Mammary epithelial cell (primary cell): ENCODE measurements at regions of chr9 and their contacts with region 1.

Region 1: GRCh38 chr9:34072868-34073590 is 24.3 kb upstream of the UBAP2 start:
- DNase-seq: peak; percentile 79
- H3K4me3 ChIP-seq: no peak overlapping the region
- H3K27ac ChIP-seq: no peak overlapping the region
- H3K4me1 ChIP-seq: peaks cover 18% of the 10 kb centered on the region
- H3K27me3 ChIP-seq: no peaks in the 10 kb centered on the region
- CTCF ChIP-seq: no peak

Region 2: DNA sequence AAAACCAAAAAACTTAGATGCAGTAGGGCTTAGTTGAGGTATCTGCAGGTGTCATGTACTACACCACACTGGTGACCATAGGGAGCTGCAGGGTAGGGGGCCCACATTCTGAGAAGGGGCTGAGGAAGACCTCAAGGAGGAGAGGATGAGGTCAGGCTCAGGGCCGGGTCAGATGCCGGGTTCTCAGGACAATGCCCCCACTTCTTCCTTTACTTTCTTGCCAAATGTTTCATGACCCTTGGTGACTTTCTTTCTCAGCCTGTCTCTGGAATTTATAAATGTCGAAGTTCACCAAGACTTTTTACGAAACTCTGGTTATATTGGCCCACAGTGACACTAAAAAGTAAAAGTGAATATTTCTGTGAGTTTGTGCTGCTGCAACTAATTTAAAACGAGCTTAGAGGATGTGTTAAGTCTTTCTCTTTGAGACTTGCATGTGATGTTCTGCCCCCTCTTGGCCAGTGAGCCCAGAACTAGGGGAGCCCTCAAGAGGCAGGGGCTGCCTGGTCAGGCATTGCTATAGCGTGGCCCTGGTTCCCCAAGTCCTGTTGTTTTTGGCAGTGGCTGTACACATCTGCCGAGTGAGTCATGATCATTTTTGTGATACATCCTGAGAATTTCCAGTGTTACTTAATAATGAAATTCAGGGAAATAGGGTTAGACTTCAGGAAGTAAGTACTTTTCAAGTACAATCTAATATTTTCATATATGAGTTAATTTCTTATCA is 1677.4 kb before region 1 on chr9:
- CTCF ChIA-PET with region 1: no interaction called
- dilution Hi-C with region 1: no loop called
- in situ Hi-C with region 1: no loop called
- intact Hi-C with region 1: no loop called
- DNase-seq: peak; percentile 88
- H3K4me3 ChIP-seq: no peak overlapping the region
- H3K27ac ChIP-seq: peak overlapping the region; percentile 88
- H3K4me1 ChIP-seq: peaks cover 25% of the 10 kb centered on the region
- H3K27me3 ChIP-seq: no peaks in the 10 kb centered on the region
- CTCF ChIP-seq: peak in 1 of 2 donors; percentile 13

Region 3: GRCh38 chr9:33623658-33624586 is 449.1 kb before region 1 on chr9:
- CTCF ChIA-PET with region 1: no interaction called
- dilution Hi-C with region 1: no loop called
- in situ Hi-C with region 1: no loop called
- intact Hi-C with region 1: loop called (anchors 5 kb)
- DNase-seq: peak; percentile 74
- H3K4me3 ChIP-seq: no peak overlapping the region
- H3K27ac ChIP-seq: no peak overlapping the region
- H3K4me1 ChIP-seq: peaks cover 29% of the 10 kb centered on the region
- H3K27me3 ChIP-seq: no peaks in the 10 kb centered on the region
- CTCF ChIP-seq: peak; percentile 77 to 84

Region 4: DNA sequence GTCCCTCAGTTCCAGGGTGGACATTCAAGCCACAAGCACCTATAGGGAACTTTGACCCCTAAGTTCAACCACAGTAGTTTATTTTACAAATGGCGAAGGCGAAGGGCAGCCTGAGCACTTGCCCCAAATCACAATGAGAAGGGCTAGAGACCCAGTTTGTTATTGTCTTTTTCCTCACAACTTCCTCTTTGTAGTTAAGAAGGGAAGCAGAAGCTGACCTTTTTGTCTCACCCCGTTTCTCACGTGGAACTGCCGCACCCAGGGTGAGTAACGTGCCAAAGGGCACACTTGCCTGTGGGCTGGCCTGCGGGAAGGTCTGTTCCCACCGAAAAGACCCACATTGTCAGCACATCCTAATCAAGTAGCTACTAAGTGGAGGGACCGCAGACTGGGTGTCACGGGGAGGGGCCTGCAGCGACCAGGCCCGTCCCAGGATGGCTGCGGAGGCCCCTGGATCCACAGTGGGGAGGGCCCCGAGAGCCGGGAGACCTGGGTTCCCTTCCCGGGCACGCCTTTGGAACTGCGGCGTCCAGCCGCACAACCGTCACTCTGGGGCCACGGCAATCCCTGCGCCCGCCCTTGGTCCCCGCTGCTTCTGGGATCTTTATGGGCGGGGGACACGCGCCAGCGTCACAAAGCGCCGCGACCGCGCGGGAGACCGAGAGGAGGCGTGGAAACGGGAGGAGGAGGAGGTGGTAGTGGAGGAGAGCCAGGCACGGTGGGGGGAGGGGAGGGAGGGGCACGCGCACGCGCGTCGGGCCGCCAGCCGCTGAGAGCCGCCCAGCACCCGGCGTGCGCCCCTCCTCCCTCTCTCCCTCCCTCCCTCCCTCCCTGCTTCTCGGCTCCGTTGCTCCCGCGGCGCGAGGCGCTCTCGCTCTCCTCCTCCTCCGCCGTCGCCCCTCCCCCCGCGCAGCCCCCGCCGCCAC is 256.4 kb before region 1 on chr9 and contains the start of gene UBE2R2:
- CTCF ChIA-PET with region 1: no interaction called
- dilution Hi-C with region 1: no loop called
- in situ Hi-C with region 1: no loop called
- intact Hi-C with region 1: loop called (anchors 5 kb)
- DNase-seq: peak; percentile 87
- H3K4me3 ChIP-seq: peak within 1 kb of the TSS; percentile 79 to 85 (median 81)
- H3K27ac ChIP-seq: peak within 1 kb of the TSS; percentile 88
- H3K4me1 ChIP-seq: peaks cover 36% of the 10 kb centered on the region
- H3K27me3 ChIP-seq: no peaks in the 10 kb centered on the region
- CTCF ChIP-seq: no peak
- total RNA-seq, gene UBE2R2: 14.8 to 38.0 TPM

Region 5: GRCh38 chr9:34025062-34025461 is 48.0 kb before region 1 on chr9:
- CTCF ChIA-PET with region 1: no interaction called
- dilution Hi-C with region 1: loop called (anchors 5 kb)
- in situ Hi-C with region 1: no loop called
- intact Hi-C with region 1: loop called (anchors 5 kb)
- DNase-seq: no peak
- H3K4me3 ChIP-seq: no peak overlapping the region
- H3K27ac ChIP-seq: no peak overlapping the region
- H3K4me1 ChIP-seq: no peaks in the 10 kb centered on the region
- H3K27me3 ChIP-seq: no peaks in the 10 kb centered on the region
- CTCF ChIP-seq: no peak

Region 6: DNA sequence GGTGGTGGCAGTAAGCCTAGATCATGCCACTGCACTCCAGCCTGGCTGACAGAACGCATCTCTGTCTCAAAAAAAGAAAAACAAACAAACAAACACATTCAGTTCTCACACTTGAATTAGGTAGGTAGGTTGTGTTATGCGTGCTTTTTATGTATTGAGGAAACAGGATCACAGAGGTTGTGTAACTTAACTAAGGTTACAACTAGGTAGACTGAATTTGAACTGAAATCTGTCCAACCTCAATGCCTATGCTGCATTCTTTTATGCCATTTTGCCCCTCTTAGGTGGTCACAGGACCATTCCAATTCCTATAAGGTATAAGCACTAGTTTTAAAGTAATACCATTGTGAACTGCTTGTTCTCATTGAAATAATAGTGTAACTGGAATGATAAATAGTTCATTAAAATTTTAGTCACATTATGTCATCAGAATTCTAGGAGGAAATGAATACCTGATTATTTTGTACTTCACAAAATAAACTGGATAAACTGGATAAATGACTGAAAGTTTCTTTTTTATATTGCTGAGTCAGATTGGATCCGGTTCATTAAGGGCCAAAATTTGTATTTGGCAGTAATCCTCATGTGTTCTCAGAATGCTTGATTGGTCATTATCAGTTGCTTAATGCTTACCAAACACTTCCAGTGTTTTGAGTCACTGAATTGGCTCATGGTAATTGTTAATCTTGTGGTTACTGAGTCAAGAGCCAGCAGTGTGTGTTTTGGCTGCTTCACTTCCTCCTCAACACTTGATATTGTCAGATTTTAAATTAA is 112.9 kb after region 1 on chr9:
- CTCF ChIA-PET with region 1: no interaction called
- dilution Hi-C with region 1: no loop called
- in situ Hi-C with region 1: no loop called
- intact Hi-C with region 1: loop called (anchors 5 kb)
- DNase-seq: peak; percentile 97
- H3K4me3 ChIP-seq: no peak overlapping the region
- H3K27ac ChIP-seq: peak overlapping the region; percentile 67
- H3K4me1 ChIP-seq: peaks cover 20% of the 10 kb centered on the region
- H3K27me3 ChIP-seq: no peaks in the 10 kb centered on the region
- CTCF ChIP-seq: no peak

Region 7: GRCh38 chr9:34233672-34234071 is 160.6 kb after region 1 on chr9:
- CTCF ChIA-PET with region 1: no interaction called
- dilution Hi-C with region 1: no loop called
- in situ Hi-C with region 1: no loop called
- intact Hi-C with region 1: no loop called
- DNase-seq: no peak
- H3K4me3 ChIP-seq: no peak overlapping the region
- H3K27ac ChIP-seq: no peak overlapping the region
- H3K4me1 ChIP-seq: peaks cover 7% of the 10 kb centered on the region
- H3K27me3 ChIP-seq: no peaks in the 10 kb centered on the region
- CTCF ChIP-seq: no peak

Region 8: GRCh38 chr9:34376596-34377403 is 303.8 kb after region 1 on chr9 and contains the start of gene MYORG:
- CTCF ChIA-PET with region 1: no interaction called
- dilution Hi-C with region 1: no loop called
- in situ Hi-C with region 1: loop called in 1 of 2 experiments (anchors 10 kb)
- intact Hi-C with region 1: loop called (anchors 1 kb)
- DNase-seq: peak; percentile 98
- H3K4me3 ChIP-seq: peak within 1 kb of the TSS; percentile 73 to 85 (median 84)
- H3K27ac ChIP-seq: peak within 1 kb of the TSS; percentile 42
- H3K4me1 ChIP-seq: peaks cover 39% of the 10 kb centered on the region
- H3K27me3 ChIP-seq: no peaks in the 10 kb centered on the region
- CTCF ChIP-seq: no peak
- total RNA-seq, gene MYORG: 23.8 to 35.0 TPM